Activated CD4-positive, alpha-beta T cell treated with anti-CD3 and anti-CD28 coated beads for 36 hours (primary cell): ENCODE measurements at regions of chr18 and their contacts with region 1.

Region 1: DNA sequence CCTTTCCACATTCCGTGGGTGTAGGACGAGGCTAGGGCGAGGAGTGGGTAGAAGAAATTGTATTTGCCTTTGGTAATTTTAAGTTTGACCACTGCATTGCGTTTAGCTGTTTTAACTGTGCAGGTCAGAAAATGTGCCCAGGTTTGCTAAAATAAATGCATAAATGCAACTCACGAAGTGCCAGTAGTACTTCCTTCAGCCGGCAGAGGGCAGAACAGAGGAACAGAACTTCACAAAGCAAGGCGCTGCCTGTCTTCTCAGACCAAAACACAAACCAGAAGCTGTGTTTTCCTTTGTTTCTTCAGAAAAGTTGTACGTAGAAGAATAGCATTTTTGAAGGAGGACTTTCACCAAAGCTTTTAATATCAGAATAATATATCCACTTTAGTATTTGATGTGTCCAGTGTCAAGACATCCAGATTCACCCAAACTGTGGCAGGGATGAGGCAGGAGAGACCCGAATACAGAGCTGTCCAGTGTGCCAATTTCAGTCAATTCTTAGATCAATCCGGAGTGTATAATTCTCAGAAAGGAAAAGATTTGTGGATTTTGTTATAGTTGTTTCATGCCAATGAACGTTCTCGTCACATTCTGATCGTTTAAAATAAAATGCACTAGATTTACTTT is 348.6 kb downstream of the DLGAP1 start:
- DNase-seq: peak; percentile 80
- ATAC-seq: peak; percentile 42
- H3K4me3 Mint-ChIP-seq: no peak overlapping the region
- H3K27ac Mint-ChIP-seq: no peak overlapping the region
- H3K4me1 Mint-ChIP-seq: no peaks in the 10 kb centered on the region
- H3K27me3 Mint-ChIP-seq: peaks cover 4% of the 10 kb centered on the region

Region 2: DNA sequence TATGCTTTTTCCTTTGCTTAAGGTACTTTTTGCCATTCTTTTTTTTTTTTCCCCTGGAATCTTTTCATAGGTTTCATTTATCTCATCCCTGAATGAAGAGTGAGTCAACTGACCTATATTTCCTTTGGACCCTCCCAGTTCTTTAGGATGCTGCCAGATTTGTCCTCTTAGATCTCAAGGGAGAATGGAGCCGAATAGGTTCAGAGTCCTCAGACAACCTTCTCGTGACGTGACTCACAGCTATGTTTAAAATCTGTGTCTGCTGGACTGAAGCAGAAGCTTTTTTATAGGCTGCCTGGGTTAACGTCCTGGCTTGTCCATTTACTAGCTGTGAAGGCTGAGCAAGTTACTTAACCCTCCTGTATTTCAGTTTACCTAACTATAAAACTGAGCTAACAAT is 10.0 kb before region 1 on chr18:
- CTCF ChIA-PET with region 1: interaction called, 10 read pairs
- POLR2A ChIA-PET with region 1: no interaction called
- intact Hi-C with region 1: no loop called
- DNase-seq: no peak
- ATAC-seq: no peak
- H3K4me3 Mint-ChIP-seq: no peak overlapping the region
- H3K27ac Mint-ChIP-seq: no peak overlapping the region
- H3K4me1 Mint-ChIP-seq: no peaks in the 10 kb centered on the region
- H3K27me3 Mint-ChIP-seq: peaks cover 11% of the 10 kb centered on the region

Region 3: DNA sequence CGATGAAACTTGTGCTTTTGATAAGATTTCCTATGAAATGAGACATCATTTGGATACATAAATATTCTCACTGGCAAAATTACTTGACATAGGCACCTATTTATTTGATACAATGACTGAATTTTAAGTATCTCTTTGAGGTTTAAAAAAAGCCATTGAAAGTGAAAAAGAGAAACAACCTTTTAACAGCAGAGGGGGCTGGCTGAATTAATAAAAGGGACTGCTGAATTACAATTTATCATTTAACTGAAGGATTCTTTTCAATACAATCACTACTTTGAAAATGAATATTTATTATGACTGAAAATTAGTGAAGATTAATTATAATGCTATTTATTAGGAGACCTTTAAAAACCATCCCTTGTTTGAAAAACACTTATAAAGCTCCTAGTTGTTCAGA is 13.3 kb after region 1 on chr18:
- CTCF ChIA-PET with region 1: interaction called, 11 read pairs
- POLR2A ChIA-PET with region 1: no interaction called
- intact Hi-C with region 1: no loop called
- DNase-seq: no peak
- ATAC-seq: no peak
- H3K4me3 Mint-ChIP-seq: no peak overlapping the region
- H3K27ac Mint-ChIP-seq: no peak overlapping the region
- H3K4me1 Mint-ChIP-seq: no peaks in the 10 kb centered on the region
- H3K27me3 Mint-ChIP-seq: peaks cover 10% of the 10 kb centered on the region

Region 4: DNA sequence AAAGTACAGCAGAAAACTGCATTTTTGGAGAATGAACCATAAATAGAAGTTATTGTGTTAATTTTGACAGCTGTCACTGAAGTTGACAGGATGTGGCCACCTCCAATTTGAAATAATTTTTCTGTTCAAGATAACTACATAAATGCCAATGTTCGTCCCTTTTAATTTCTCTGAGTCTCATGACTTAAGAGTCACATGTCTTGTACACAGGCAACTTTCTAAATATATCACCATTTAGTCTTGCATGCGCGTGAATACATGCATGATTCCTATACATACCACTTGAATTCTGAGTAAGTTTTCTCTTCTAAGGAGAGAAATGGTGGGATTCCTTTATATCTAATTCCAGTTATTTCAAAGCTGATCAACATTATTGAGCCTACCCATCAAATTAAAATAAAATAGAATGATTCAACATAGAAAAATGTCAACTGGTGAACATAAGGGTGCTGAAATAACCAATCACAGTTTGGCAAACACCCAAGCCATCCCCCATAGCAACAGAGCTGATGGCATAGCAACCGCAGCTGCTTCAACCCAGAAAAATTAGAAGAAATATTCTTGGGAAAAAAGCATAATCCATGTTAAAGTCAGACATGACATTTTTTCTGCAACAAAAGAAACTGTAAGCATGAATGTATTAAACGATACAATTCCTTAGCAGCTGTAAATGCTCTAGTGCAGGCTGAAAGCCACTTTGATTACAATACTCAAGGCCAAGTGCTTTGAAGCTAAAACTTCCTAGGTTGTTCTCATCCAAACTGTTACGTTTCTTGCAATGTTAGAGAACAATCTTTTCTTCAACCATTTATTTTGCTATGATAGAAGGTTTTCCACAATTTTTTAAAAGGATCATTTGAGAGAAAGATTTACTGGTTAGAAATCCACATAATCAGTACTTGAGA is 65.9 kb after region 1 on chr18:
- CTCF ChIA-PET with region 1: no interaction called
- POLR2A ChIA-PET with region 1: no interaction called
- intact Hi-C with region 1: no loop called
- DNase-seq: no peak
- ATAC-seq: no peak
- H3K4me3 Mint-ChIP-seq: no peak overlapping the region
- H3K27ac Mint-ChIP-seq: no peak overlapping the region
- H3K4me1 Mint-ChIP-seq: no peaks in the 10 kb centered on the region
- H3K27me3 Mint-ChIP-seq: no peaks in the 10 kb centered on the region

Region 5: DNA sequence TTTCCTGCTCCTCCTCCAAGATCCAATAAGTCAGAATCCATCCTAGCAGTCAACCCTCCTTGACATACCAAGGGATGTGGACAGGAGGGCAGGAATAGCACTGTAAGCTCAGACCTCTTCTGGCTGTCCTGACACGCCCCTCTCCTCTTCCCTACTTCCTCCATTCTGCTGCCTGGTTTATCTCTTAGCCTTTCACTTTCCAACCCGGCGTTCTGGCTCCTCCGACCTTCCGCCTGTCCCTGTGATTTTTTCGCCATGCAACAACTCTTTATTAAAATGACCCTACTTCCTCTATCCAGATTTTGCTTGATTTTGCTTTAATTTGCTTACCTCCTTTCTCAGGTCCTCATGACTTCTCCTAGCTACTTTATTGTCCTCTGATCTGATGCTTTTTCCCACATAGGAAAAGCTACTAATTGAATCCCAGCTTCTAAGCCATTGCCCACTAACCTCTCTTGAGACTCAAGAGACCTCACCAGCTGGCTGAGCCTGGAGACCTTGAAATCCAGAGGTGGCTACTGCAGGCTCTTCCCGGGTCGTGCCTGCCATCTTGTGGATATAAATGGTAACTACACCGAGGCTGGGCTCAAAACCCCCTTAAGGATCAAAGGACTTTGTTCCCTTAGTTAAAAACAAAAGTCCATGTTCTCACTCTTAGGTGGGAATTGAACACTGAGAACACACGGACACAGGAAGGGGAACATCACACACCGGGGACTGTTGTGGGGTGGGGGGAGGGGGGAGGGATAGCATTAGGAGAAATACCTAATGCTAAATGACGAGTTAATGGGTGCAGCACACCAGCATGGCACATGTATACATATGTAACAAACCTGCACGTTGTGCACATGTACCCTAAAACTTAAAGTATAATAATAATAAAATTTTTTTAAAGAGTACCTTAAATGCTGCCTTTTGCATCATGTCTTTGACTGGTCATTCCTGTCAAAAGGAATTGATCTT is 951.1 kb after region 1 on chr18:
- CTCF ChIA-PET with region 1: interaction called, 27 read pairs
- POLR2A ChIA-PET with region 1: no interaction called
- intact Hi-C with region 1: loop called (anchors 1 kb)
- DNase-seq: peak; percentile 74
- ATAC-seq: peak; percentile 74
- H3K4me3 Mint-ChIP-seq: no peak overlapping the region
- H3K27ac Mint-ChIP-seq: no peak overlapping the region
- H3K4me1 Mint-ChIP-seq: peaks cover 18% of the 10 kb centered on the region
- H3K27me3 Mint-ChIP-seq: peaks cover 2% of the 10 kb centered on the region